ENCODE measurements at regions of chr10 and their contacts with region 1.

Region 1: DNA sequence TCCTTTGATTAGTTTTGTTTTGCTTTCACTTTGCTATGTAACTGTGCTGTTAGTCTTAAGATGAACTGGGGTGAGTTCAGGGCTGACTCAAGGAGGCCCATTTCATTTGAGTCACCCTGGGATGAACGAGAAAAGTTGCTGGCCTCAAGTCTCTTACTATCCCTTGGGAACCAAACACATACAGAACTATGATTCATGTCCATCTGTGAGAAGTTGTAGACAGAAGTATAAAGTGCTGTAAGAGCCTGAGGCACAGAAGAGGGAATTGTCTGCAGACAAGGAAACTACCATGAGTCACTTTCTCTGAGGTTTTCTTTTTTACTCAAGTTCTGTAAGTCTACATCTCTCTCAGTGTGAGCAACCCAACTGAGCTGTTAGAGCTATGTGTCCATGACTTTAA is 179.8 kb upstream of the CSTF2T start:
- DNase-seq: peak in 1 of 2 donors; percentile 22
- ATAC-seq: peak; percentile 78 to 97 (median 86)
- H3K4me3 ChIP-seq: no peak overlapping the region
- H3K27ac ChIP-seq: peak overlapping the region in 9 of 10 donors; percentile 34 to 77 (median 51)
- H3K4me1 ChIP-seq: peaks cover 0 to 40% (median 26%) of the 10 kb centered on the region in 9 donors
- H3K27me3 ChIP-seq: no peaks in the 10 kb centered on the region
- CTCF ChIP-seq: no peak

Region 2: GRCh38 chr10:51960494-51960895 is 81.3 kb after region 1 on chr10:
- intact Hi-C with region 1: loop called in 1 of 10 experiments (anchors 5 kb)
- DNase-seq: peak in 1 of 2 donors; percentile 15
- ATAC-seq: peak in 7 of 8 donors; percentile 39 to 69 (median 59)
- H3K4me3 ChIP-seq: no peak overlapping the region
- H3K27ac ChIP-seq: no peak overlapping the region
- H3K4me1 ChIP-seq: peaks cover 0 to 24% (median 4%) of the 10 kb centered on the region in 9 donors
- H3K27me3 ChIP-seq: no peaks in the 10 kb centered on the region
- CTCF ChIP-seq: peak; percentile 17 to 69 (median 51)

Region 3: DNA sequence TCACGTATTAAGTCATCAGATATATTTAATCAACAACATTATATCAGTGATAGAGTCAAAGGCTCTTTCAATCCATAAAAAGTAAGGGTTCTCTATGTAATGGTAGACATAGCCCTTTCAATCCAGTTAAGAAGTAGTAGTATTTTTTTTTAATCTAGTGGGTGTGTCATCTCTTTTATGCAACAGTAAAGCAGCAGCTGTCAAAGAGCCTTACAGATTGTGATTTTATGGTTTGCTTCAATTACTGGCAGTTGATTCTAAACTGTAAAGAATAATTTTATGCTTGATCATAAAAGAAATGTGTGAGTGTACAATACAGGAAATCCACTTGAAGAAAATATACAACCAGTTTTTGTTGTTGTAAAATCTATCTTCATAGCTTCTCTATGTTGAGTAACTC is 1795.9 kb after region 1 on chr10:
- intact Hi-C with region 1: loop called in 1 of 10 experiments (anchors 10 kb)
- DNase-seq: no peak
- ATAC-seq: no peak
- H3K4me3 ChIP-seq: no peak overlapping the region
- H3K27ac ChIP-seq: no peak overlapping the region
- H3K4me1 ChIP-seq: no peaks in the 10 kb centered on the region
- H3K27me3 ChIP-seq: no peaks in the 10 kb centered on the region
- CTCF ChIP-seq: no peak